PC-9 (cell line): ENCODE measurements at regions of chrX and their contacts with region 1.

Region 1: DNA sequence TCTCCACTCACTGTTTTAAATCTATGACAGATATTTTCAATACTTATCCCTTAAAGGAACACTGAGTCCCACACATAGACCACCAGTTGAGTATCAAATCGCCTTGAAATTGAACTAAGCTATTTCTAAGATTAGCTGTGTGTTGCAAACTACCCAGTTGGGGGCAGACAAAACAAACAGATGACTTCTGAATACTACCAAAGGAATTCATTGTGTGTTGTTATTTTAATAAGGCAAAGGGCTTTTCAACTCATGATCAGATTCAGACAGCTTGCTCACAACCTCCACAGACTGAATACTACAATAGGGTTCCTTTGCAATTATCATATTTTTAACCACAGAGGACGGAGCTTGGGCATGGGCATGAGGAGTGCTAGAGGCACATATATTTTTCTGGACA is 283.0 kb upstream of the GPC4 start:
- DNase-seq: peak in 1 of 2 experiments; percentile 62
- H3K4me3 ChIP-seq: no peak overlapping the region
- H3K27ac ChIP-seq: no peak overlapping the region
- H3K4me1 ChIP-seq: 0 out of 2 replicates have a peak, but pooled peaks cover 9% of the 10 kb centered on the region
- H3K27me3 ChIP-seq: no peaks in the 10 kb centered on the region
- CTCF ChIP-seq: peak; percentile 46; the same call in 1 of the 2 replicates

Region 2: GRCh38 chrX:133776072-133776471 is 77.8 kb after region 1 on chrX:
- CTCF ChIA-PET with region 1: no interaction called
- POLR2A ChIA-PET with region 1: no interaction called
- intact Hi-C with region 1: loop called (anchors 1 kb)
- DNase-seq: peak in 1 of 2 experiments; percentile 10
- H3K4me3 ChIP-seq: no peak overlapping the region
- H3K27ac ChIP-seq: no peak overlapping the region
- H3K4me1 ChIP-seq: no peaks in the 10 kb centered on the region
- H3K27me3 ChIP-seq: no peaks in the 10 kb centered on the region
- CTCF ChIP-seq: peak; percentile 64

Region 3: DNA sequence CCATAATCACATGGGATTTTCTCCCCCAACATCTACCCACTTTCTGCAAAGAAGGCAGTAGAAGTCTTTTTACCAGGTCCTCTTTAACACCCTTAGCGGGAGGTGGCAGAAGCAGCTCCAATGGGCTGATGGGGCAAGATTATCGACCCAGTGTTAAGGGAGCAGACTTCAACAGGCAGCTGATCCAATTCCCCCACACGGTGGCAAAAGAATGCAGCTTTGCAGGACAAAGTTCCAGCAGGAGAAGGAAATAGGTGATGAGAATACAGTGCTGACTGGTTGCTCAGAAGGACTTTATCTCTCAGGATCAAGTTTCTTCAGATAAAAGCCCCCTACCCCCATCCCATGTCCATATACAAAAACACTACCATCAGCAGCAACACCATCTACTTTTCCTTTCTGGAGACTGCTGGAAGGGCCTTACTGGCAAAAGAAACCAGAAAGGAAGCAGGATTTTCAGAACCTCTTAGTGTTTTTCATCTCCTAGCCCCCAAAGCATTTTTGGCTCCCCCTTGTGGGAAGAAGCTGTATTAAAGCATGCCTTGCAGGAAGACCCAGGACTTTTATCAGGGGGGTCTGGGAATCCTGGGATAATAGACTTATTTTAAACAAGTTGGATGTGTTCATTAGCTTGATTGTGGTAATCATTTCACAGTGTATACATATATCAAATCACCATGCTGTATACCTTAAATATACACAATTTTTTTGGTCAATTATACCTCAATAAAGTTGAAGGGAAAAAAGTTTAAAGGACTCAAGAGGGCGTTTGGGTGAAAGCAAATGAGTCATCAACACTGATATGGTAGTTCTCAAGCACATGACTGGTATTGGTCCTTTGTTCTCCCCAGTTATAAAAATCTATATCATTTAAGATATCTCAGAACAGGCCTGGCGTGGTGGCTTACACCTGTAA is 140.7 kb after region 1 on chrX:
- CTCF ChIA-PET with region 1: no interaction called
- POLR2A ChIA-PET with region 1: no interaction called
- intact Hi-C with region 1: loop called (anchors 1 kb)
- DNase-seq: peak in 1 of 2 experiments; percentile 5
- H3K4me3 ChIP-seq: no peak overlapping the region
- H3K27ac ChIP-seq: no peak overlapping the region
- H3K4me1 ChIP-seq: no peaks in the 10 kb centered on the region
- H3K27me3 ChIP-seq: no peaks in the 10 kb centered on the region
- CTCF ChIP-seq: peak; percentile 84